GM23248 (cell line): ENCODE measurements at regions of chr18 and their contacts with region 1.

Region 1: GRCh38 chr18:3238742-3239141 is 8.9 kb upstream of the MYL12A start:
- DNase-seq: peak; percentile 21
- H3K4me3 ChIP-seq: no peak overlapping the region
- H3K27ac ChIP-seq: no peak overlapping the region
- H3K4me1 ChIP-seq: no peaks in the 10 kb centered on the region
- H3K27me3 ChIP-seq: no peaks in the 10 kb centered on the region

Region 2: DNA sequence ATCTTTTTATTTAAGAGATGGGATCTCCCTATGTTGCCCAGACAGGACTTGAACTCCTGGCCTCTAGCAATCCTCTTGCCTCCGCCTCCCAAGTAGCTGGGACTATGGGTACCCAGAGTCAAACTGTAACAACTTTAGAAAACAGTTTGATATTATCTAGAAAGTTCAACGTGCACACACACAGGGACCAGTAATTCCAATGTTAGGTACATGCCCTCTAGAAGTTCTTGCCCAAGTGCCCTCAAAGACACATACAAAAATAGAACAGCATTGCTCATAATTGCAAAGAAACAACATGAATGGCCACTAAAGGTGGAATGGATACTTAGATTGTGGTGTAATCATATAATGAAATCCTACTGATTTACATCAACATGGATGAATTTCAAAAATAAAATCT is 213.2 kb before region 1 on chr18:
- in situ Hi-C with region 1: no loop called
- DNase-seq: no peak
- H3K4me3 ChIP-seq: no peak overlapping the region
- H3K27ac ChIP-seq: no peak overlapping the region
- H3K4me1 ChIP-seq: peaks cover 9% of the 10 kb centered on the region
- H3K27me3 ChIP-seq: no peaks in the 10 kb centered on the region

Region 3: DNA sequence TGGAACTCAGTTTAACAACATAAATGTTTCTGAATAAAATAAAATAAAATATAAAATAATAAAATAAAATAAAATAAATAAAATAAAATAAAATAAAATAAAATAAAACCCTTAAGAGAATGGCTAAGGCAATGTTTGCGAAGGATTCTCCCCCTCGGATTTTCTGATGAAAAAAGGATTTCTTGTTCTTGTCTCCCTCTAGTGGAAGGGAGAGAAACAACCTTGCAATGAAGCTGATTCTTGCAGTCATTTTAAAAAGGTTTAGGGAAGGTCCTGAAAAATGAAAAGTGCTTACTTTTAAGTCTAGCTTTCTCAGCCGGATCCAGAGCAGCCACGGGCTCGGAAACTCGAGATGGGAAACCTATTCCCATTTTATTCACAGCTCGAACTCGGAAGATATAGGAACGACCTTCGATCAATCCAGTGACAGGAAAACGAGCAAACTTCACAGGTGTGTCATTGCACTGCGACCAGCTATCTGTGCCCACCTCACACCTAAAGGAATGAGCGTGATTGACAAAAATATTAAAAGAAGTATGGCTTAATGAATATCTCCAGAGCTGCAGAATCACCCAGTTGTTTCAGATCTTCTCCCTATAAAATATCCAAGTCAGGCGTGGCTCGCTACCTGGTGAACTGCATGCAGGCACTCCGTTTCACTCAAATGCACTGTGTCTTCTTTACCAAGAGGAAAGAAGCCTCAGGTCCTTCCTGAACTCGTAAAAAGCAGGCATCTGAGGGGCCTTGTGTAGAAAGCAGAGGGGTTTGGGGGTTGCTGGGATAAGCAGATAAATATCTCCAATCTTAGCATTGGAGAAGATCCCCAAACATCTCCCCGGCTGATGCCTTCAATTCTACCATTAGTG is 87.1 kb before region 1 on chr18:
- in situ Hi-C with region 1: loop called (anchors 5 kb)
- DNase-seq: peak; percentile 62
- H3K4me3 ChIP-seq: no peak overlapping the region
- H3K27ac ChIP-seq: no peak overlapping the region
- H3K4me1 ChIP-seq: peaks cover 8% of the 10 kb centered on the region; the same call in 1 of the 2 replicates
- H3K27me3 ChIP-seq: no peaks in the 10 kb centered on the region

Region 4: GRCh38 chr18:3384664-3385189 is 146.0 kb after region 1 on chr18:
- in situ Hi-C with region 1: no loop called
- DNase-seq: no peak
- H3K4me3 ChIP-seq: no peak overlapping the region
- H3K27ac ChIP-seq: no peak overlapping the region
- H3K4me1 ChIP-seq: peaks cover 15% of the 10 kb centered on the region
- H3K27me3 ChIP-seq: no peaks in the 10 kb centered on the region

Region 5: GRCh38 chr18:3747176-3747973 is 508.6 kb after region 1 on chr18:
- in situ Hi-C with region 1: no loop called
- DNase-seq: peak; percentile 20
- H3K4me3 ChIP-seq: no peak overlapping the region
- H3K27ac ChIP-seq: no peak overlapping the region
- H3K4me1 ChIP-seq: no peaks in the 10 kb centered on the region; the same call in 1 of the 2 replicates
- H3K27me3 ChIP-seq: no peaks in the 10 kb centered on the region